Activated CD4-positive, alpha-beta T cell treated with anti-CD3 and anti-CD28 coated beads for 36 hours (primary cell): ENCODE measurements at regions of chr6 and their contacts with region 1.

Region 1: DNA sequence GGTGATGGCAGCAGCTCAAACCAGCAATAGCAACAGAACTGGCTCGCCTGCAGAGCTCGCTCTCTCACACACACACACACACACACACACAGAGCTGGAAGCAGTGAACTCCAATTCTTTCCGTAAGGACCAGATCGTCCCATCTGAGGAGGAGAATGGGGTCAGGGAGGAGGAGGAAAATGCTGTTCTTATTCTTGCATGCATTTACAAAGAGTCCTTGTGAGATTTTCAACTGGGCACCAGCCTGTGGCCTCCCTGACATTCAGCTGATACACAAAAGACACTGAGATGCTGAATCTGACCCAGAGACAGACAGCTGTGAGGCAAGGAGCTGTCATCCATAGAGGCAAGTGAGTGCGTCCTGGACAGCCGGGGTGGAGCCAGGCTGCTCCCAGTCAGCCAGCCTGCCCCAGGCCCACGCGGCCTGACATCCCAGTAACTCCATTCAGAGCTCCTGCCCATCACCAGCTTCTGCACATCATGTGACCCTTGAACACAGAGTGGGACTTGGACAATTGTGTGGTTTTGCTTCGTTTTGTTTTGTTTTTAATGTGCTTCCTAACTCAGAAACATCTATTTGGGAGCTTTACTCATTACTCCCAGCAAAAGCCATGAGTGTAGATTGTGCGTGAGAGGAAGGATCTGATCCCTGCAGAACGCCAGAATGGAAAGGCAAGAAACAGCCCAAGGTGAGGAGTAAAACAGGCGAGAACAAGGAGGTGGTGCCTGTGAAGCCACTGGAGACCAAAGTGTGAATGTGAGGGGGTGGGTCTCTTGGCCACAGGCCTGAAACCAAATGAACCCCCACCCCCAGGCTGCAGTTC is 2.1 kb downstream of the SERPINB9 start:
- DNase-seq: peak; percentile 26
- ATAC-seq: no peak
- H3K4me3 Mint-ChIP-seq: peak overlapping the region; percentile 91
- H3K27ac Mint-ChIP-seq: peak overlapping the region; percentile 93
- H3K4me1 Mint-ChIP-seq: peaks cover 45% of the 10 kb centered on the region
- H3K27me3 Mint-ChIP-seq: no peaks in the 10 kb centered on the region

Region 2: DNA sequence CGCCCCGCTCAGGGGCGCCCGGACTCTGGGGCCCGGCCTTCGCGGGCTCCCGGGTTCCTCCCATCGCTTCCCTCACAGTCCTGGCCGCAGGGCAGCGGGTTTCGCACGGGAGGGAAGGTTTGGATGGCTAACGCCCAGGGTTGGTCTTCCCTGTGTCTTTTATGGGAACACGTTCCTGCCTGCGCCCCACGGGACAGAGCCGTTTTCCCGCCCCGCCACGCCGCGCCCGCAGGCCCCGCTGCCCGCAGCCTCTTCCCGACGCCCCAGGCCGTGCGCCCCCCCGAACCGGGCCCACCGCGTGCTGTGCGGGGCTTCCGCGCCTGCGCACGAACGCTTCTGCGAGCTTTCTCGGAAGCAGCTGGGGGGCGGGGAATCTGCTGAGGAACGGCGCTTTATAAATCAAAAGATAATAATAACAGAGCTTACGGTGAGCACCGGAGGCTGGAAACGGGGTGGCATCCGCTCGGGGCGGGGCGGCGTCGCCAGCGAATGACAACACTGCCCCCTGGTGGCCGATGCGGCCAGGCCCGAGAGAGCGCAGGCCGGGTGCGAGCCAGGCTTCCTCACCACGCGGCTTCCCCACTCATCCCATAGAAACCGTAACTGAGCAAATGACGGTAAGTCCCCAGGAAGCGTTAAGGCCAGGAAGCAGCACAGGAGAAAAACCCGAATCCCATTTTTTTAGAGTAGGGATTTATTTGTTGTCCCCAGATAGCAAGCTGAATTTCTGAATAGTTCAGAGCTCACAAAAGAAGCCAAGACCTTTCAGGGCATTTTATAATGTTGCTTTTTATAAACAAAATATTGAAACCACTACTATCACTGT is 266.7 kb before region 1 on chr6:
- CTCF ChIA-PET with region 1: no interaction called
- POLR2A ChIA-PET with region 1: no interaction called
- intact Hi-C with region 1: no loop called
- DNase-seq: peak; percentile 91
- ATAC-seq: peak; percentile 99
- H3K4me3 Mint-ChIP-seq: peak overlapping the region; percentile 50
- H3K27ac Mint-ChIP-seq: peak overlapping the region; percentile 48
- H3K4me1 Mint-ChIP-seq: peaks cover 8% of the 10 kb centered on the region
- H3K27me3 Mint-ChIP-seq: peaks cover 8% of the 10 kb centered on the region

Region 3: GRCh38 chr6:2862712-2863181 is 38.3 kb before region 1 on chr6:
- CTCF ChIA-PET with region 1: interaction called, 3 read pairs
- POLR2A ChIA-PET with region 1: interaction called, 6 read pairs
- intact Hi-C with region 1: loop called (anchors 1 to 2 kb)
- DNase-seq: peak; percentile 77
- ATAC-seq: peak; percentile 54
- H3K4me3 Mint-ChIP-seq: peak overlapping the region; percentile 66
- H3K27ac Mint-ChIP-seq: peak overlapping the region; percentile 99
- H3K4me1 Mint-ChIP-seq: peaks cover 80% of the 10 kb centered on the region
- H3K27me3 Mint-ChIP-seq: no peaks in the 10 kb centered on the region

Region 4: GRCh38 chr6:2966347-2966746 is 65.3 kb after region 1 on chr6:
- CTCF ChIA-PET with region 1: no interaction called
- POLR2A ChIA-PET with region 1: no interaction called
- intact Hi-C with region 1: no loop called
- DNase-seq: no peak
- ATAC-seq: no peak
- H3K4me3 Mint-ChIP-seq: no peak overlapping the region
- H3K27ac Mint-ChIP-seq: no peak overlapping the region
- H3K4me1 Mint-ChIP-seq: peaks cover 15% of the 10 kb centered on the region
- H3K27me3 Mint-ChIP-seq: peaks cover 13% of the 10 kb centered on the region